Posterior cingulate gyrus (tissue), 11 donors: ENCODE measurements at regions of chr1 and their contacts with region 1.

Region 1: DNA sequence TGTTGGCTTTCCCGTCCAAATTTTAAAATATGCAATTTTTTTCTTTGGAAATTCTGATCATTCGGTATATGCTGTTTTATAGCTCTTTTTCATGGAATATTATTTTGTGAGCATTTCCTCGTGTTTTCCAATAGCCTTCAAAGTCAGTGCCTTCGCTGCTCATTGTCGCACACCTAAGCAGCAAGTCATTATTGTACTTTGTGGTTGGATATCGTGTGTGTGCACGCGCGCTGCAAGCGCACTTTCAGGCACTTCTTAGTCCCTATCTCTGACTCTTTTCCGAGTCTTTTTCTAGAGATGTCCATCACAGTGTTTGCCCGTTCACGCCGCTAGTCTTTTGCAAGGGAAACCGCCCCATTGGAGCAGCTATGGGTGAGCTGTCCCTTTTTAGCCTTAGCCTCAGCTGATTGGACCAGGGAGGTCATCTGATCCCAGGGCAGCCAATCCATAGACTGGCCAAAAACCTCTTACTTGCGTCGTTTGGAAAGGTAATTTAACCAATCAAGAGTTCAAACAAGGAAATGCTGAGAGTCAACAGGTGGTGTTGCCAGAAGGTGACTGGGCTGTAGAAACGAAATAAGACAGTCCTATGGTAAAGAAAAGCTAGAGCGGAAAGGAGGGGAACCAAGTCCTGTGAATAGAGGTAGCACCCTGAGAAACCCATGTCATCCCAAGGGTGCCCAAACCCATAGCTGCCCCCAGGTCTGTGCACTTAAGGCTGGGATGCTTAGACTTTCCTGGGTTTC is 708 bp upstream of the HYI start:
- DNase-seq: peak in 9 of 10 donors; percentile 59 to 96 (median 77)

Region 2: DNA sequence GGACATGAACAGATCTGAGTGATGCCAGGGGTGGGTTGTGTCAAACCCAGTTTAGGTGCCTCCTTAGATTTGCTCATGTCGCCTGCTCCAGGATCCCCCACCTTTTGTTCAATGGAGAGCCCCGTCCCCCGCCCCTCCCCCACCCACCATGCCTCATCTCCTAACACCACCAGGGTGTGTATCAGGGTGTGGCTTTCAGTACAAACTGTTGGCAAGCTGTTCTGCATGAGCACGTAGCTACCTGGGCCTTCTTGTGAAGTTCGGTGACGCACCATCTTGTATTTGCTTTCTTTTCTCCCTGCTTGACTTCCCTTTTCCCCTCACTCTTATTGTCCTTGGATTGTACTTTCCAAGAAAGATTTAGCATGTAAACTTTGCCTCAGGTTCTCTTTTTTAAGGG is 377.2 kb before region 1 on chr1:
- intact Hi-C with region 1: no loop called
- DNase-seq: no peak

Region 3: GRCh38 chr1:43256675-43257570 is 197.5 kb before region 1 on chr1:
- intact Hi-C with region 1: no loop called
- DNase-seq: no peak

Region 4: DNA sequence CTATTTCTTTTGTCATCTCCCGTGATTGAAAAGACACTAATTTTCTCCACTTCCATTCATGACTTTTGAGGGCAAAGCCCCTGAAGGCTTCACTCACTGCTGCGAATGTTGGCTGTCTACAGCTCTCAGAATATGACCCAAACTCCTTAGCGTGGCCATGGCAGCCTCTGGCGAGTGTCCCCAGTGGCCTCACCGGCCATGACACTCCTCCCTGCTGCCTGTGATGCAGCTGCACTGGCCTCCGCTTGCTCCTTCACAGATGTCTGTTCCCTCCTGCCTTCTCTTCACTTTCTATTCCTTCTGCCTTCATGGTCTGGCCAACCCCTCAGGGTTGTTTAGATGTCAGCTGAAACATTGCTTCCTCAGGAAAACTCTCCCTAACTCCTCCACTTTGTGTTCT is 45.4 kb after region 1 on chr1:
- intact Hi-C with region 1: no loop called
- DNase-seq: no peak

Region 5: DNA sequence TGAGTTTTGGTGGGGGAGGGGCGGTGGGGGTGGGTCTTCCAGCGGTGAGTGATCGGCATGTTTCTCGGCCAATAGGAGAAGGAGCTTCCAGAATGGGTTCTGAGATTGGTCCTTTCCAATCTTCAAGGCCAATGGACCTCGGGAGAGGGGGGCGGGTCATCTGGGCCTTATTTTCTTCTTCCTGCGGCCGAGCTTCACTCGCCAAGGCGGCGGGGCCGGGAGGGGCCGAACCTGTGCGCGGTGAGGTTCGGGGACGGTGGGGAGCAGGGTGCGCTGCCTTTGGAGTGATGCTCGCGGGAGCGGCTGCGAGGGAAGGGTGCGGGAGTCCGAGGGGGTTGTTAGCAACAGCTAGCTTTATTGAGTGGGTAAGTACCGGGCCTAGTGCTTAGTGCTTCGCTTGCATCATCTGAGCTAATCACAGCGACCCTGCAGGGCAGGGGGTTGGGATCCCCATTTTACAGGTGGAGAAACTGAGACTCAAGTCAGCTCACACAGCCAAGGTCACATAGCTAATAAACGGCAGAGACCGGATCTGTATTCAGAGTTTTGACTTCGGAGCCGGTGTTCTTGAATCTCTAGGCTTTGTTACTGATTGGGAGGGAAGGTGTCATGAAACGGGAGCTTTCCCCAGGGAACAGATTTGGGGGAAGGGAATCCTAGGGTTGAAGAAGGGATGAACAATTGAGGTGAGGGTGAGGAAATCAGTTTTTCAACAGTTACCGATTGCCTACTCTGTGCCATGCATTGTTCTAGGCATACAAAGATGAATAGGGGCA is 196.1 kb after region 1 on chr1:
- intact Hi-C with region 1: loop called (anchors 10 kb)
- DNase-seq: peak; percentile 87 to 99 (median 93)